Activated CD4-positive, alpha-beta T cell treated with anti-CD3 and anti-CD28 coated beads for 36 hours (primary cell): ENCODE measurements at regions of chr2 and their contacts with region 1.

Region 1: DNA sequence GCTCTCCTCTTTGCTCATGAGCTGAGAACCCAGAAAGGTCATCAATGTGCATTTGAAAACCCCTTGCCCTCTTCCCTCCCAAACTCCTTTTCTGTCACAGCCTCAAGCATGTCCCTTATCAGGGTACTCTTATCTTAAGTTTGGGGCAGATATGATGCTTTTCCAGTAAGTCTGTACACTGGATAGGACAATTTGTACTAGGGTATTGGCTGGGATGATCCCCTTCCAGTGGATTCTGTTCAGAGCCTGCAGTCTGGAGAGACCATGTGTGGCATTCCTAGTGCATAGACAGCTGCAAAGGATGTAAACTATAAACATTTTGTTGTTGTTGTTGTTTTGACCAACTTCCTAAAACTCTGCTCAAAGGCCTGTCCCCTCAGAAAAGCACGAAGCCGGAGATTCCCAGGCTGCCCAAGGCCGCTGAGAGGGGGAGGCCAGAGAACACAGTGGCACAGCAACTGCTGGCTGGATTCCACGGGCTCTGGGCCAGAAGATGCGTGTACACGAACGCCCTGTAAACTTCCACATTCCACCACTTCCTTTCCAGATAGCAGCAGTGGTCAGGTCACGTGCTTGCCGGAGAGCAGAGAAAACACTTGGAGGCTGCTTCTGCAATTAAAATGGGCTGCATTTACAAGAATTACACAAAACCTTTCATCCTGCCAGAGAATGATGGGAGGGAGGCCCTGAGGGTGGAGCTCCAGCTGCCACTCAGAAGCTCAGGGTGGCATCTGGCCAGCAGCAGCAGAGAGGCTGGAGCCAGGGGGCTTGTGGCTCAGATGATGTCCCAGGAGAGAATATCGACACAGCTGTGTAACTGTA is 42.1 kb downstream of the BMP10 start:
- DNase-seq: peak; percentile 80
- ATAC-seq: peak; percentile 49
- H3K4me3 Mint-ChIP-seq: peak overlapping the region; percentile 51
- H3K27ac Mint-ChIP-seq: peak overlapping the region; percentile 88
- H3K4me1 Mint-ChIP-seq: peaks cover 55% of the 10 kb centered on the region
- H3K27me3 Mint-ChIP-seq: no peaks in the 10 kb centered on the region

Region 2: DNA sequence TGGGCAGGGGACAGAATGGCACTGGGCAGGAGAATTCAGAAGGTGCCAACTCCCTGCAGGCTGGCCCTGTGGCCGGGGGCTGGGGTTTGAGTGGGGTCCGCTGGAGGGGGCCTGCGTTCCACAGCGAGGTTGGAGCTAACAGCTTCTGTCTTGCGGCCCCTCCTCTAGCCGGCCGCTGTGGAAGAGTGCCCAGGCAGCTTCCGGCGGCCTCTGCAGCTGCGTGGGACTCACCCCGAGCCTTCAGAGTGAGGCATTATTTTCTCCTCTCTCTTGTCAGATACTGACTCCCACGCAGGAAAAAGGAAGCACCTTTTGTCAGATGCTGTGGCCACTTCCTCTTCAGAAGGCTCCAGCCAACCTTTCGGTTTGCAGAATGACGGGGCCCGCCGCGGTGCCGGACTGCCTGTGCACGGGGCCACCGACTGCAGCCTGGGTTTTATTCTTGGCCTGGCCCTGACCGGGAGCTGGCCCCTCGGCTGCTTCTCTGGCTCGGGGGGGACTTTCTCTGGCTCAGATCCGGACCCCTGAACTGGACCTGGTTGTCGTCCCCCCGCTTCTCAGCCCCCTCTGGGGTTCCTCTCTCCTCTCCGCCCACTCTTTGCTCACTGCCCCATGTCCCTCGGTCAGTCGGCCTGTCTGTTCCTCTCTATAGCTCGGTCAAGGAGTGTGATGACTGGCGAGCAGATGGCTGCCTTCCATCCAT is 54.4 kb before region 1 on chr2:
- CTCF ChIA-PET with region 1: no interaction called
- POLR2A ChIA-PET with region 1: no interaction called
- intact Hi-C with region 1: loop called in 1 of 2 experiments (anchors 2 kb)
- DNase-seq: peak; percentile 79
- ATAC-seq: peak; percentile 68
- H3K4me3 Mint-ChIP-seq: peak overlapping the region; percentile 71
- H3K27ac Mint-ChIP-seq: peak overlapping the region; percentile 99
- H3K4me1 Mint-ChIP-seq: peaks cover 84% of the 10 kb centered on the region
- H3K27me3 Mint-ChIP-seq: no peaks in the 10 kb centered on the region

Region 3: DNA sequence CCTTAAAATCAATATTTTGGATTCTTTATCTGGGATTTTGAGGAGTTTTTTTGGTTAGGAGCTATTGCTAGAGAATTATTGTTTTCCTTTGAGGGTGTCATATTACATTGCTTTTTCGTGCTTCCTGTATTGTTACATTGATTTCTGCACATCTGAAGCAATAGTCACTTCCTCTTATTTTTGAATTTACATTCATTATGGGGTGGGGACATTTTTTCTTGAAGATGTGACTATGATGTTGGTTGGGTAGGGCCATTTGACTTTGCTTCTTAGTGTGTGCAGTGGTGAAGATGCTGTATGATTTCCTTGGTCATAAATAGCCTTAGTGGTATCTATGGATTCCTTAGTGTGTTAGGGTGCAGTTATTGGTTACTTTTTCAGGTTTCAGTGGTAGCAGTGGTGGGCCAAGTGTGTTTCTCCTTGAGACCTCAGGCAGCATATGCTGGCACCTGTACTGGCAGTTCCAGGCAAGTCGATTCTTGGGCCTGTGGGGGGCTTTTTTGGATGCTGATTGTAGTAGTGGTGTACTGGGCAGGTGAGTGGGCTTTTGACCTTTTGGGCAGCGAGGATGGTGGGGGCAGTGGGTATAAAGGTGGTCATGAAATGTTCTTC is 32.7 kb before region 1 on chr2:
- CTCF ChIA-PET with region 1: interaction called, 4 read pairs
- POLR2A ChIA-PET with region 1: no interaction called
- intact Hi-C with region 1: loop called in 1 of 2 experiments (anchors 2 kb)
- DNase-seq: no peak
- ATAC-seq: peak; percentile 86
- H3K4me3 Mint-ChIP-seq: no peak overlapping the region
- H3K27ac Mint-ChIP-seq: peak overlapping the region; percentile 90
- H3K4me1 Mint-ChIP-seq: peaks cover 76% of the 10 kb centered on the region
- H3K27me3 Mint-ChIP-seq: no peaks in the 10 kb centered on the region

Region 4: DNA sequence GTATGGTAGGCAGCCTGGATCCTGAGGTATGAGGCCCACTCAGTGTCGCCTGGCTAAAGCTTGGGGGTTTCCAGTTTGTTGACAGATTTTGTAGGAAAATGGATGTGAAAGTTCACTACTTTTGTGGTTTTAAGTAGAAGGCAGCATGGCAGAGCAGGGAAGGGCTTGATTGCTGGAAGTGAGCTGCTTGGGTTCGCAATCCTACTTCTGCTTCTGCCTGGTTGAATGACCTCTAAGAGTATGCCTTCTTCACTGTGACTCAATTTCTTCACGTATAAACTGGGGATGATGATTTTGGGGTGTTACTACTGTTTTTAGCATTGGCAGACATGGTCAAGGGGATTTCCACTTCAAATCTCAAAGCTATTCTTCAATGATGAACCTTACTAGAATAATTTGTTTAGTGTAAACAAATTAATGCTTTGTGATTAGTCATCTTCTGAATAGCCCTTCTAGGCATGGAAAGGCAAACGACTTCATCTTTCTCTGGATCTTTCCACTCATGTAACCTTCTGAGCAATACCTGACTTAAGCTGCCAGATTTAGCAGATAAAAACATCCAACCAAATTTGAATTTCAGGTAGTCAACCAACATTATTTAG is 28.9 kb after region 1 on chr2:
- CTCF ChIA-PET with region 1: no interaction called
- POLR2A ChIA-PET with region 1: no interaction called
- intact Hi-C with region 1: no loop called
- DNase-seq: no peak
- ATAC-seq: peak; percentile 78
- H3K4me3 Mint-ChIP-seq: no peak overlapping the region
- H3K27ac Mint-ChIP-seq: no peak overlapping the region
- H3K4me1 Mint-ChIP-seq: peaks cover 9% of the 10 kb centered on the region
- H3K27me3 Mint-ChIP-seq: no peaks in the 10 kb centered on the region

Region 5: DNA sequence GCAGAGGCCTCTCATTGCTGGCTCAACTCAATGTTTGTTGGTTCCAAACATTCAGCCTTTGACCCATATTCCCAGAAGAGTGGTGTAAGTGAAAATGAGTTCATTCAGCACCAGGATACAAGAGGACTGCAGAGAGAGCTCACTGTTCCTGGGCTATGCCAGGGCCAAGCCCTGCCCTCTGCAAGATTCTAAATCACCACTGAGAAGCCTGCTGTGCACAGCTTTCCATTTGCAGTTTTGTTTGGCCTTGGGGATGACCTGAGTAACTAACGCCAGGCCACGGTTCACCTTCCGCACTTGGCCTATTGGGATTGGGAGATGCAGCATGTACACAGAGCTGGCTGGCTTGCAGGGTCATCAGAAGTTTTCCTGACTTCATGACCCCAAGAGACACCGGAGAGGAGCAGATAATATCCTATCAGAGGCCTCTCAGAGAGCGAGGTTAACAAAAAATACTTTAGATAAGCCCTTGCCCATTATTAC is 158.0 kb after region 1 on chr2:
- CTCF ChIA-PET with region 1: no interaction called
- POLR2A ChIA-PET with region 1: no interaction called
- intact Hi-C with region 1: no loop called
- DNase-seq: no peak
- ATAC-seq: no peak
- H3K4me3 Mint-ChIP-seq: no peak overlapping the region
- H3K27ac Mint-ChIP-seq: no peak overlapping the region
- H3K4me1 Mint-ChIP-seq: no peaks in the 10 kb centered on the region
- H3K27me3 Mint-ChIP-seq: peaks cover 12% of the 10 kb centered on the region